ENCODE measurements at regions of chr17 and their contacts with region 1.

Region 1: GRCh38 chr17:16380640-16381495 is at the start of gene UBB:
- H3K4me3 ChIP-seq: peak within 1 kb of the TSS; percentile 67
- H3K27ac ChIP-seq: peak within 1 kb of the TSS; percentile 100
- H3K4me1 ChIP-seq: peaks cover 10% of the 10 kb centered on the region; the same call in 1 of the 2 replicates
- CTCF ChIP-seq: peak; percentile 72

Region 2: DNA sequence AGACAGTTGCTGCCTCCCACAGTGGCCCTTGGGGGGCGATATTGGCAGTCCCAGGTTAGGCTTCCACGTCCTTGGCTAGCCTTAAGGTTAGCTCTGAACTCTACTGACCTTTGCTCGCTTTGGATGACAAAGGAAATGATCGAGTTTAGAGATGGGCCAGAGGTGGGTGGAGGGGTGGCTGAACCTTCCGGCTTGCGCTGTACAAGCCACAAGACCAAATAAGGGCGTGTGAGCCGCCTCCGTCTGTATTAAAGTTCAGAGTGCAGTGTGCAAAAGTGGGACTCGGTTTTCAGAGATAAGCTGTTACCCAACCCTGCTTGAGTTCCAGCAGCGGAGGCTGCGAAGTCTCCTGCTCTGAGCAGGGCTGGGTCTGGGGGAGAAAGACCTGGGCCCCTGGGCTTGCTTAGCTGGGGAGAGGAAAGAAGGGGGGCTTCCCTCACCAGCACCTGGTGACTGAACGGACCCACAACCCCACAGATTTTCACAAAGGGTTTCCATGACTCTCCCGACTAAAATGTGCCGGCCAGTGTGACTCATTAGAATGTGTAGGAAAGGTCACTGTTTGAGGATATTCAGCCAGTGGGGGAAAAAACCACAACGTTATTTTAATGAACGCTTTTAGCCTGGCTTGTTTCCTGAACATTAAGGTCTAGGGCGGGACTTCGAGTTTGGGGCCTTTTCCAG is 94.8 kb before region 1 on chr17:
- CTCF ChIA-PET with region 1: interaction called, 4 read pairs
- POLR2A ChIA-PET with region 1: interaction called, 15 read pairs
- H3K4me3 ChIP-seq: peak overlapping the region; percentile 3
- H3K27ac ChIP-seq: peak overlapping the region; percentile 72
- H3K4me1 ChIP-seq: peaks cover 14% of the 10 kb centered on the region
- CTCF ChIP-seq: peak; percentile 61

Region 3: GRCh38 chr17:16353317-16354174 is 27.3 kb before region 1 on chr17 and contains the start of gene CENPV:
- CTCF ChIA-PET with region 1: interaction called, 6 read pairs
- POLR2A ChIA-PET with region 1: interaction called, 44 read pairs
- H3K4me3 ChIP-seq: peak within 1 kb of the TSS; percentile 77
- H3K27ac ChIP-seq: peak within 1 kb of the TSS; percentile 97
- H3K4me1 ChIP-seq: peaks cover 3% of the 10 kb centered on the region; the same call in 1 of the 2 replicates
- CTCF ChIP-seq: peak; percentile 19; the same call in 1 of the 2 replicates

Region 4: GRCh38 chr17:16407911-16408588 is 27.2 kb after region 1 on chr17:
- CTCF ChIA-PET with region 1: interaction called, 3 read pairs
- POLR2A ChIA-PET with region 1: interaction called, 27 read pairs
- H3K4me3 ChIP-seq: no peak overlapping the region
- H3K27ac ChIP-seq: no peak overlapping the region
- H3K4me1 ChIP-seq: peaks cover 3% of the 10 kb centered on the region; the same call in 1 of the 2 replicates
- CTCF ChIP-seq: no peak

Region 5: DNA sequence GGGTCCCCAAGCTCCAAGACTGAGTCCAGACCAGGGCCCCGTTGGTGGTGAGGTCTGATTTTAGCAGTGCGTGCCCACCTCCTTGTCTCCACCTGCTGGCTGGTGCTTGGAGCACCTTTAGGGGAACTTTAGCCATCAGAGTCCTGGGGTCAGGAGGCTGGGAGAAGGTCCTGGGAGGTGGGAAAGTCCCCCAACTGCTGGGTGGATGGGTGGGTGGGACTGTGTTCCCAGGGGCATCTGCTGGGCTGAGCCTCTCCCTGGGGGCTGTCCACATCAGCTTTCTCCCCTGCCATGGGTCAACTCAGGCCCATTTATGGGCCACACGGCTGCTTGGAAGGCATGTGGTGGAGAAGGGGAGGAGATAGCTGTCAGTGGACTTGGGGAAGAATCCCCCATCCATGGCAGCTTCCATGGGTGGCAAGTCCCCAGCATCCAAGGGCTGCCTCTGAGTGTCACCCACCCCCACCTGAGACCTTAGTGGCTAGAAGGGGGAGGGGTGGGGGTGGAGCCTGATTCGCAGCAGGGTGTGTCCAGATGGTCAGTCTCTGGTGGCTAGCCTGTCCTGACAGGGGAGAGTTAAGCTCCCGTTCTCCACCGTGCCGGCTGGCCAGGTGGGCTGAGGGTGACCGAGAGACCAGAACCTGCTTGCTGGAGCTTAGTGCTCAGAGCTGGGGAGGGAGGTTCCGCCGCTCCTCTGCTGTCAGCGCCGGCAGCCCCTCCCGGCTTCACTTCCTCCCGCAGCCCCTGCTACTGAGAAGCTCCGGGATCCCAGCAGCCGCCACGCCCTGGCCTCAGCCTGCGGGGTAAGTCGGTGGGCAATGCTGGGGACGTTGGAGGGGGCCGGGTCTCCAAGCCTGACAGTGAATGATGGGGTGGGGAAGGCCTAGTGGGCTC is 34.4 kb after region 1 on chr17 and contains the start of gene TRPV2:
- CTCF ChIA-PET with region 1: interaction called, 8 read pairs
- POLR2A ChIA-PET with region 1: interaction called, 13 read pairs
- H3K4me3 ChIP-seq: no peak within 1 kb of the TSS
- H3K27ac ChIP-seq: no peak within 1 kb of the TSS
- H3K4me1 ChIP-seq: peaks cover 11% of the 10 kb centered on the region; the same call in 1 of the 2 replicates
- CTCF ChIP-seq: no peak; the same call in 1 of the 2 replicates

Region 6: GRCh38 chr17:16428098-16428882 is 47.4 kb after region 1 on chr17:
- CTCF ChIA-PET with region 1: interaction called, 3 read pairs
- POLR2A ChIA-PET with region 1: interaction called, 20 read pairs
- H3K4me3 ChIP-seq: no peak overlapping the region
- H3K27ac ChIP-seq: no peak overlapping the region
- H3K4me1 ChIP-seq: no peaks in the 10 kb centered on the region
- CTCF ChIP-seq: peak; percentile 84

Region 7: GRCh38 chr17:16537130-16537458 is 156.2 kb after region 1 on chr17:
- CTCF ChIA-PET with region 1: no interaction called
- POLR2A ChIA-PET with region 1: interaction called, 16 read pairs
- H3K4me3 ChIP-seq: no peak overlapping the region
- H3K27ac ChIP-seq: no peak overlapping the region
- H3K4me1 ChIP-seq: peaks cover 4% of the 10 kb centered on the region
- CTCF ChIP-seq: no peak

Region 8: GRCh38 chr17:16568541-16569357 is 187.9 kb after region 1 on chr17 and contains the start of gene ZNF287:
- CTCF ChIA-PET with region 1: no interaction called
- POLR2A ChIA-PET with region 1: no interaction called
- H3K4me3 ChIP-seq: peak within 1 kb of the TSS; percentile 60
- H3K27ac ChIP-seq: no peak within 1 kb of the TSS; the same call in 1 of the 2 replicates
- H3K4me1 ChIP-seq: peaks cover 4% of the 10 kb centered on the region
- CTCF ChIP-seq: no peak